ENCODE measurements at regions of chrX and their contacts with region 1.

Region 1: DNA sequence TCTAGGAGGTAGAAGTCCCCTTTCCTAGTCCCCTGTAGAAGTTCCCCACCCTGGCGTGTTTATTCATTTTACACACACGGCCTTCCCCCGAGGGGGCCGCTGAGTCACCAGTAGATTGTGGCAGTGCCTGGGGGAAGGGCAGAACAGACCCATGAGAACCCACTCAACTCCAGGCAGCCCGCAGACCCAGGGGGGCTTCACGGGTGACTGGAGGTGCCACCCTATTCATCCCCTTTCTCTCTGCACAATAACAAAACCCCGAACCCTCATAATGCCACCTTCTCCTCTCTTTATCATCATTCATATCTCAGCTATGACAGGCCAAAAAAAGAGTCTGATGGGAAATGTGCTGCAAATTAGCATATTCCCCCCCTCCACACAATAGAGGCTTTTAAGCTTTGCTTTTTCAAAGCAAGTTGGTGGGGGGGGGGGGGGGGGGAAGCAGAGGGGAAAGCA is 20.4 kb upstream of the GPM6B start:
- DNase-seq: no peak
- H3K4me3 ChIP-seq: no peak overlapping the region
- CTCF ChIP-seq: no peak

Region 2: DNA sequence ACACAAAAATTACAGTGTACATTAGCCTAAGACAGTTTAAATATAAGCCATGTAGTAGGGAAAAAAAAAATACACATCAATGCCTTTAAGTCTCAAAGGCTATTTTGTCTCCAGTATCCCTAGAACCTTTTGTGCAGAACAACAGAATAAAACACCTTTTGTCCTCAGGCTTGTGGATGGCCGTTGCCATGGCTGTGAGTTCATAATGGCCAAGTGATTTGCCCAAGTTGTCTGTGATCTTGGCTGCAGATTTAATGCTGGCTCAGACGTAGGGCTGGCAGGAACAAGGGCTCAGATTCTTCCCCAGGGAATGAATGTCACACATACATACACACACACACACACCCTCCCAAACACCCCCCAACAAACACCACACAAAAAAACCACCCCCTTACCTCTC is 45.8 kb before region 1 on chrX:
- in situ Hi-C with region 1: no loop called
- DNase-seq: no peak
- H3K4me3 ChIP-seq: no peak overlapping the region
- CTCF ChIP-seq: no peak

Region 3: DNA sequence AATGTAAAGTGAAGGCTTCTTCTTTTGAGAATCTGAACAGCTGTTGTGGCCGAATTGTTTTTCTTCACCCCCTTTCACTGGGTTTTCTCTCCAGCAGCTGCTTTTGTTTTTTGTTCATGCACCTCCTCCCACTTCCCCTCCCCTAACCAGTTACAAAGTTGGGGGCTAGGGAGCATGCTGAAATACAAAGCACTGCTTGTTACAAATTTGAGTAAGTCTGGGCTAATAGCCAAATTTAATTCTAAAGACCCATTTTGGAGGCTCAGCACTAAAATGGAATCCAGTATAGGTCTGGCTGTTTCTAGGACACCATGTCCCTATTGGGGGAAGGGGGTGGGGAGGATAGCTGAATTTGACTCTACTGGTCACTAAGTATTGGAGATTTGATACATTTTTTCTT is 68.8 kb after region 1 on chrX:
- in situ Hi-C with region 1: loop called (anchors 5 kb)
- DNase-seq: no peak
- H3K4me3 ChIP-seq: no peak overlapping the region
- CTCF ChIP-seq: no peak

Measured in astrocyte of the cerebellum (primary cell).